ENCODE measurements at regions of chr19 and their contacts with region 1.

Region 1: GRCh38 chr19:53365134-53365898 is at the start of gene ZNF525:
- DNase-seq: peak; percentile 97
- ATAC-seq: peak; percentile 100
- H3K4me3 ChIP-seq: peak within 1 kb of the TSS; percentile 79 to 99 (median 90)
- H3K4me3 Mint-ChIP-seq: peak within 1 kb of the TSS; percentile 93
- H3K27ac ChIP-seq: peak within 1 kb of the TSS; percentile 66 to 91
- H3K27ac Mint-ChIP-seq: peak within 1 kb of the TSS; percentile 94
- H3K4me1 ChIP-seq: peaks cover 9 to 11% of the 10 kb centered on the region in 2 donors
- H3K4me1 Mint-ChIP-seq: peaks cover 25% of the 10 kb centered on the region
- H3K27me3 ChIP-seq: no peaks in the 10 kb centered on the region
- H3K27me3 Mint-ChIP-seq: no peaks in the 10 kb centered on the region
- CTCF ChIP-seq: peak; percentile 63
- total RNA-seq, gene ZNF525: 33.8 and 34.3 TPM in 2 replicates

Region 2: GRCh38 chr19:52601025-52601973 is 764.0 kb before region 1 on chr19:
- CTCF ChIA-PET with region 1: no interaction called
- POLR2A ChIA-PET with region 1: no interaction called
- intact Hi-C with region 1: loop called (anchors 1 kb)
- DNase-seq: peak; percentile 92
- ATAC-seq: peak; percentile 99
- H3K4me3 ChIP-seq: peak overlapping the region; percentile 59 to 89 (median 82)
- H3K4me3 Mint-ChIP-seq: peak overlapping the region; percentile 90
- H3K27ac ChIP-seq: peak overlapping the region; percentile 43 to 62
- H3K27ac Mint-ChIP-seq: peak overlapping the region; percentile 87
- H3K4me1 ChIP-seq: peaks cover 11 to 16% of the 10 kb centered on the region in 2 donors
- H3K4me1 Mint-ChIP-seq: peaks cover 25% of the 10 kb centered on the region
- H3K27me3 ChIP-seq: no peaks in the 10 kb centered on the region
- H3K27me3 Mint-ChIP-seq: no peaks in the 10 kb centered on the region
- CTCF ChIP-seq: peak; percentile 61

Region 3: GRCh38 chr19:53333463-53334449 is 31.6 kb before region 1 on chr19 and contains the start of gene ZNF845:
- CTCF ChIA-PET with region 1: interaction called, 3 read pairs
- POLR2A ChIA-PET with region 1: no interaction called
- intact Hi-C with region 1: loop called (anchors 1 kb)
- DNase-seq: peak; percentile 95
- ATAC-seq: peak; percentile 100
- H3K4me3 ChIP-seq: peak within 1 kb of the TSS; percentile 94 to 99 (median 96)
- H3K4me3 Mint-ChIP-seq: peak within 1 kb of the TSS; percentile 96
- H3K27ac ChIP-seq: peak within 1 kb of the TSS; percentile 60 to 81
- H3K27ac Mint-ChIP-seq: peak within 1 kb of the TSS; percentile 95
- H3K4me1 ChIP-seq: peaks cover 10 to 21% of the 10 kb centered on the region in 2 donors
- H3K4me1 Mint-ChIP-seq: peaks cover 22% of the 10 kb centered on the region
- H3K27me3 ChIP-seq: peaks cover 0 to 3% (median 0%) of the 10 kb centered on the region in 4 experiments
- H3K27me3 Mint-ChIP-seq: peaks cover 11% of the 10 kb centered on the region
- CTCF ChIP-seq: no peak
- total RNA-seq, gene ZNF845: 16.9 and 17.4 TPM in 2 replicates

Region 4: DNA sequence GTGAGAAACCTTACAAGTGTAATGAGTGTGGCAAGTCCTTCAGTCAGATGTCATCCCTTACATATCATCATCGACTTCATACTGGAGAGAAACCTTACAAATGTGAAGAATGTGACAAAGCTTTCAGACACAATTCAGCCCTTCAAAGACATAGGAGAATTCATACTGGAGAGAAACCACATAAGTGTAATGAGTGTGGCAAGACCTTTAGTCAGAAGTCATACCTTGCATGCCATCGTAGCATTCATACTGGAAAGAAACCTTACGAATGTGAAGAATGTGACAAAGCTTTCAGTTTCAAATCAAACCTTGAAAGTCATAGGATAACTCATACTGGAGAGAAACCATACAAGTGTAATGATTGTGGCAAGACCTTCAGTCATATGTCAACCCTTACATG is 16.1 kb after region 1 on chr19:
- CTCF ChIA-PET with region 1: no interaction called
- POLR2A ChIA-PET with region 1: no interaction called
- intact Hi-C with region 1: no loop called
- DNase-seq: no peak
- ATAC-seq: no peak
- H3K4me3 ChIP-seq: no peak overlapping the region
- H3K4me3 Mint-ChIP-seq: no peak overlapping the region
- H3K27ac ChIP-seq: no peak overlapping the region
- H3K27ac Mint-ChIP-seq: peak overlapping the region; percentile 37
- H3K4me1 ChIP-seq: no peaks in the 10 kb centered on the region
- H3K4me1 Mint-ChIP-seq: no peaks in the 10 kb centered on the region
- H3K27me3 ChIP-seq: no peaks in the 10 kb centered on the region
- H3K27me3 Mint-ChIP-seq: no peaks in the 10 kb centered on the region
- CTCF ChIP-seq: no peak

Region 5: DNA sequence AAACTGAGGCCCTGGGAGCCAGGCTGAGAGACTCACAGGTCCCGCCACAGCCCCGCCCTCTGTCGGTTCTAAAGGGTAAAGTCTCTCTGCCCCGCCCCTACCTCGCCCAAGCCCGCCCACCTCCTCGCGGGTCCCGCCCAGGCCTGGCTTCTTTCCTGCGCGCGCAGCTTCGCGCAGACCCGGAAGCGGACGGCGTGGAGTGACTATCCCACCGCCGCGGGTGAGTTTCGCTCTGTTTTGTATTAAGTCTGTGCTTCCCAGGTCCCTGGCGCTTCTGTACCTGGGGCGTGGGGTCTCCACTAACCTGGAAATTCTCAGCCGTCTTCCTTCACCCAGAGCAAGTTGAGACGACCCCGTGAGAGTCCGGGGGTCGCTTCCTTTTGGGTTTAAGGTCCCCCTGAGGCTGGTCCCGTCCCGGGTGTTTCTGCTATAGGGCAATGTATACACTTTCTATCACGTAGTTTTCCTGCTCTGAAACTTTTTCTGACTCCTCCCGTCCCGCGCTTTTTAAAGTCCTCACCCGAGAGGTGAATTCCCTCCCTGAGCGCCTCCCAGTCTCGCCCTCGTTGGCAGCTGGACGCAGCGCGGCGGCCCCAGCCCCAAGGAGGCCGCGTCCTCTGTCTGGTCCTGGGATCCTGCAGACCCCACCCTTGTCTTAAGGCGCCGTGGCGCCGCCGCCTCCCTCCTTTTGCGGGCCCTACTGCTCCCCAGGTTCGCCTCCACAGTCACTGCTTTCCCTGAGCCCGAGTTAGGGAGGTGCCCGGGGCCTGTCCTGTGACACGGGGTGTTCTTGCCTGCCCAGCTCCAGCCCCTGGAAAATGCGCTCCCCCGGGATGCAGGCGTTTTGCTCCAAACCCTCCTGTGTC is 29.9 kb after region 1 on chr19 and contains the start of gene ZNF765:
- CTCF ChIA-PET with region 1: no interaction called
- POLR2A ChIA-PET with region 1: no interaction called
- intact Hi-C with region 1: loop called (anchors 1 kb)
- DNase-seq: peak; percentile 96
- ATAC-seq: peak; percentile 100
- H3K4me3 ChIP-seq: peak within 1 kb of the TSS; percentile 65 to 85 (median 78)
- H3K4me3 Mint-ChIP-seq: peak within 1 kb of the TSS; percentile 86
- H3K27ac ChIP-seq: peak within 1 kb of the TSS; percentile 34 to 85
- H3K27ac Mint-ChIP-seq: peak within 1 kb of the TSS; percentile 69
- H3K4me1 ChIP-seq: peaks cover 11 to 16% of the 10 kb centered on the region in 2 donors
- H3K4me1 Mint-ChIP-seq: peaks cover 30% of the 10 kb centered on the region
- H3K27me3 ChIP-seq: no peaks in the 10 kb centered on the region
- H3K27me3 Mint-ChIP-seq: no peaks in the 10 kb centered on the region
- CTCF ChIP-seq: peak; percentile 64
- total RNA-seq, gene ZNF765: 24.0 and 26.6 TPM in 2 replicates

Region 6: DNA sequence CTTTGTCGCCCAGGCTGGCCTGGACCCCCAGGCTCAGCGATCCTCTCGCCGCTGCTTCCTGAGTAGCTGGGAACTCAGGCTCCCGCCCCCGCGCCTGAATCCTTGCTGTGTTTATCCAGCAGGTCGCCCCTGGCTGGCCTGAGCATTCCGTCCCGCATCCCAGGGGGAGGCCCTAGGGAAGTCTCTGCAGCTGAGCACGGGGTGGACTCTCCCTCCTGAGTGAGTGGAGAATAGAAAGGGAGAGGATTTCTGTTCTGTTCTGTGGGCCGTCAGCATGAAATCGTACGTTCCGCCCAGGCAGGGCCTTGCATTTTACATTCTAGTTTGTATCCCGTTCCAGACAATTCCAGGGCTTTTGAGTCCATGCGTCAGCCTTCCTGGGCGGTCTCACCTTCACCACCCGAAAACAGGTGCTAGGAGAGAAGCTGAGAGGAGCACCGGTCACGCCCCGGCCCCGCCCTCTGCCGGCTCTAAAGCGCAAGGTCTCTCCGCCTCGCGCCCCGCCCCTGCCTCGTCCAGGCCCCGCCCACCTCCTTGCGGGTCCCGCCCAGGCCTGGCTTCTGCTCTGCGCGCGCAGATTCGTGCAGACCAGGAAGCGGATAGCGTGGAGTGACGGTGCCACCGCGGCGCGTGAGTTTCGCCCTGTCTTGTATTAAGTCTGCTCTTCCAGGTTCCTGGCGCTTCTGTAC is 66.2 kb after region 1 on chr19 and contains the start of gene ZNF761:
- CTCF ChIA-PET with region 1: no interaction called
- POLR2A ChIA-PET with region 1: no interaction called
- intact Hi-C with region 1: loop called (anchors 1 kb)
- DNase-seq: peak; percentile 97
- ATAC-seq: peak; percentile 98
- H3K4me3 ChIP-seq: peak within 1 kb of the TSS; percentile 60 to 83 (median 79)
- H3K4me3 Mint-ChIP-seq: peak within 1 kb of the TSS; percentile 95
- H3K27ac ChIP-seq: peak within 1 kb of the TSS; percentile 61 to 82
- H3K27ac Mint-ChIP-seq: peak within 1 kb of the TSS; percentile 89
- H3K4me1 ChIP-seq: peaks cover 10 to 13% of the 10 kb centered on the region in 2 donors
- H3K4me1 Mint-ChIP-seq: peaks cover 34% of the 10 kb centered on the region
- H3K27me3 ChIP-seq: no peaks in the 10 kb centered on the region
- H3K27me3 Mint-ChIP-seq: no peaks in the 10 kb centered on the region
- CTCF ChIP-seq: peak; percentile 39
- total RNA-seq, gene ZNF761: 14.9 and 18.9 TPM in 2 replicates